ENCODE measurements at regions of chr2 and their contacts with region 1.

Region 1: DNA sequence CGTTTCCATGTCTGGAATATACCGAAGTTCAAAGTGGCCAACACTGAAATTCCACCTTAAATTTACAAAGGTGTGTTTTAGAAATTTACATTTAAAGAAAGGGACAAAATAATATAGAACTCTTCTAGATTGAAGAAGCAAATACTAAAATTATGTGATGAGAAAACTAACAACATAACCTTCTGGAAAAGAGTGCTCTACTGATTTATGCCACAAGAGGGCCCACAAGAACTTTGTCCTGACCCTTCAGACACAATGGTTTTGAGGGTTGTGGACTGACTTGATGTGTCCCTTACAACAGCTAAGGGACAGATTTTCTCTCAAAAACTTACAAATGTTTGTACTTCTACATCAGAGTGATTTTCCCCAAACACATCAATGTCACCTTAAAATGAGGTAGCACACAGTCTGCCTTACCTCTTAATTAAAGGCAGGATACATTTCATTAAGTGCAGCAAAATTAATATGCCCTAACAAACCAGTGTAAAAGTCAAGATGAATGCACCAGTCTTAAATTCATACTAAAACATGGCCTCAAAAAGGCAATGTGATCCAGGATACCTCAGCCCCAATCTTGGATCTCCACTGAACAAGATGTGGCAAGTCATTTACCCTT is 36.2 kb downstream of the EIF2AK3 start:
- DNase-seq: peak in 27 of 42 donors; percentile 14 to 81 (median 49)

Region 2: DNA sequence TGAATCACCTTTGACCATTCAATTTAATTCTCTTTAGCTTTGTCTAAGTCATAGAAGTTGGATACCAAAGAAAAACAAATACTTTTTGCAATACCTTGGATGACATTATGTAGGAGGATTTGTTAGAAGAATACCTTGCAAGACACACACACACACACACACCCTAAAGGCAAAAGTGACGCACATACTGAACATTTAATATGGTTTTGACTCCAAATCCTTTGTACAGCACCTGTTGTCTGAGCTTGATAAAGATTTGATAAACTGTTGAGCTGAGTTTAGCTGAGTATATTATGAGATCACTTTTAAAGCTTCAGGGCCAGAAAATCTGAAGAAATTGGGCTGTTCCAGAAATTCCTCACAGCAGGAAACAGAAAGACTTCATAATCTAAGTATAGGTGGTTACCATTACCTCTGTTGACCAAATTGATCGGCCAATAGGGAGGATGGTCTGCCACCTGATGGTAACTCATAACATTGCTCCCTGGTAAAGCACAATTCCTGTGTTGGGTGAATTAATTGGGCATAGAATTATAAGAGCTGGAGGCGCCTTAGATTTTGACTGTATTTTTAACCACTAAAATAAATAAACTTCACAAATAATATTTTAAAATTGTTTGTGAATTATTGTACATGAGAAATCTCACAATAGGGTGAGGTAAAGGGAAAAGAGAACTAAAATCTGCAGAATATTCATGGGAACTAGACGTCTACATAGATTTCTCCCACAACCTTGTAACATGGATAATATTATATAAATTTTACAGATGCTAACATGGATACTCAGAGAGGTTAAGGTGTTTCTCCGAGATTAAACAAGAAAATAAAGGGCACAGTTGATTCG is 78.5 kb after region 1 on chr2:
- intact Hi-C with region 1: loop called (anchors 5 kb)
- DNase-seq: peak in 9 of 42 donors; percentile 1 to 52 (median 12)